Left colon (tissue), 2 donors: ENCODE measurements at regions of chr20 and their contacts with region 1.

Region 1: DNA sequence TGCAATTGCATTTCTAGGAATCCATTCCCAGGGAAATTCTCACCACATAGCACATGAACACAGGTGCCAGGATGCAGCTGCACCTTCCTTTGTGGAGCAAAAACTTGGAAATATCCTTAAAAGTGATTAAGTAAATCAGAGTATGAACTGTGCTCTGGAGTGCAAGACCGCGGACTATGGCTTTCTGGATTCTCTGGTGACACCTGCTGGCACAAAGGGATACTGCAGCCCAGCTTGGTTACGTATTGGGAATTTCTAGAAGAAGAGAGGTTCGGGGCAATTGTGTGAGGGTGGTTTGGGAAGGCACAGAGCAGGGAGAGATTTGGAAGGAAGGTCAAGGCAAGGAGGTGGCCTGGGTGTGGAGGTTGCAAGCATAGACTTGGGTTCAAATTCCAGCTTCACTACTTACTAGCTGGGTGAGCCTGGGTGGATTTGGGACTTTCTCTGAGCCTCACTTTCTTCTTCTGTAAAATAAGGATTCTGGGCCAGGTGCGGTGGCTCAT is 15.9 kb upstream of the PEDS1 start:
- DNase-seq: peak; percentile 61 to 86
- ATAC-seq: peak; percentile 14

Region 2: DNA sequence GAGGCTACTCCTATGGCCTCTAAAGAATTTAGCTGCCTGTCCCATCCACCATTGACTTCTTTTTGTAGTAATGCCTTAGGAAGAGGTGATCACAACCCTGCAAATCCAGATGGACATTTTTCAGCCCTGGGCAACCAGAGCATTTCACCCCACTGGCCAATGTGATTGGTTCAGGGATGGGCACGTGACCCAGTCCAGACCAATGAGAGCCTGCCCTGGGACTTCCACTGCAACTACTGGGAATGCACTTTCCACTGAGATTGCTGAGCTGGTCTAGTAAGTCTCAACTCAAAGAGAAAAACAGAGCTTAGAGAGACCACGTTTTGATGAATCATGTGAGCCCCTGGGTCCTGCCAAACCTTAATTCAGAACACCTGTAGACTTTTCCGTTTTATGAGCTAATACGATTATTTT is 47.5 kb before region 1 on chr20:
- intact Hi-C with region 1: loop called in 1 of 2 experiments (anchors 2 kb)
- DNase-seq: no peak
- ATAC-seq: no peak